Right ventricle myocardium inferior (tissue), 1 donor: ENCODE measurements at regions of chr10 and their contacts with region 1.

Region 1: DNA sequence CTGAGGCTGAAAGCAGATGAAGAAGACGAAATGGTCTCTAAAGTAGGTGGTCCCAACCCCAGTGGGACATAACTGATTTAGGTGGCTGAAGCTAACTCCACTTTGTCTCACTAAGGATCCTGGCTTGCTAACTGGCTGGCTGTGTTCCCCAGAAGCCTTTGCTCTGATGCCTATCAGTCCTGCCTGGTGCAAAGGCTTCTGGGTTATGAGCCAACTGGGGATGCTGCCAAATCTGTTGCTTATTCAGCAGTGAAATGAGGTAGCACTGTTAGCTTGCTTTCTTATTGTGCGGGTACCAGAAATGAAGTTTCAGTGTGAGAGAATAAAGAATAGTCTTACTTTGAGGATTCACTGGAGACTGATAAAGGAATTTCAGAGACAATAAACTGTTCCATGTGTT is 18.1 kb downstream of the PRKG1 start:
- DNase-seq: peak; percentile 80
- ATAC-seq: peak; percentile 92

Region 2: GRCh38 chr10:51029172-51029641 is 63.2 kb before region 1 on chr10:
- intact Hi-C with region 1: no loop called
- DNase-seq: no peak
- ATAC-seq: no peak

Region 3: GRCh38 chr10:51145375-51145774 is 53.0 kb after region 1 on chr10:
- intact Hi-C with region 1: loop called (anchors 5 kb)
- DNase-seq: no peak
- ATAC-seq: no peak

Region 4: GRCh38 chr10:51231754-51232153 is 139.4 kb after region 1 on chr10:
- intact Hi-C with region 1: loop called (anchors 5 kb)
- DNase-seq: no peak
- ATAC-seq: no peak